ENCODE measurements at regions of chr1 and their contacts with region 1.

Region 1: GRCh38 chr1:247681288-247681897 is 1.9 kb upstream of the OR13G1 start:
- DNase-seq: peak; percentile 52 to 79 (median 54)
- ATAC-seq: peak; percentile 91
- H3K4me3 ChIP-seq: no peak overlapping the region
- H3K27ac ChIP-seq: no peak overlapping the region
- H3K4me1 ChIP-seq: no peaks in the 10 kb centered on the region
- H3K27me3 ChIP-seq: no peaks in the 10 kb centered on the region
- CTCF ChIP-seq: peak; percentile 67 to 87 (median 71)
- EP300 ChIP-seq: no peak
- POLR2A ChIP-seq: no peak
- RAD21 ChIP-seq: peak; percentile 76 to 80

Region 2: DNA sequence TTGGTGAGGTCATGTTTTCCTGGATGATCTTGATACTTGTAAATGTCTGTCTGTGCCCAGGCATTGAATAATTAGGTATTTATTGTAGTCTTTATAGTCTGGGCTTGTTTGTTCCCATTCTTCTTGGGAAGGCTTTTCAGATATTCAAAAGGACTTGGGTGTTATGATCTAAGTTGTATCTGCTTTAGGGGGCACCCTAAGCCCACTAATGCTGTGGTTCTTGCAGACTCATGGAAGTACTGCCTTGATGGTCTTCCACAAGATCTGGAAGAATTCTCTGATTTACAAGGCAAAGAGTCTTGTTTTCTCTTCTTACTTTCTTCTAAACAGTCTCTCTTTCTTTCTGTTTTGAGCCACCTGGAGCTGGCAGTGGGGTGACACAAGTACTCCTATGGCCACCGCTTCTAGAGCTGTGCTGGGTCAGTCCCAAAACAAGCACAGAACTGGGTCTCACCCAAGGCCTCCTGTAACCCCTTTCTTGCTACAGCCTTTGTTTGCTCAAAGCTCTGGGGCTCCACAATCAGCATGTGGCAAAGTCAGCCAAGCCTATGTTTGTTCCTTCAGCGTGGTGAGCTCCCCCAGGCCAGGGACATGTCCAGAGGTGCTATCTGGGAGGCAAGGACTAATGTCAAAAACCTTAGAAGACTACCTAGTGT is 412.9 kb before region 1 on chr1:
- CTCF ChIA-PET with region 1: no interaction called
- POLR2A ChIA-PET with region 1: no interaction called
- in situ Hi-C with region 1: no loop called
- intact Hi-C with region 1: no loop called
- DNase-seq: no peak
- ATAC-seq: no peak
- H3K4me3 ChIP-seq: no peak overlapping the region
- H3K27ac ChIP-seq: no peak overlapping the region
- H3K4me1 ChIP-seq: no peaks in the 10 kb centered on the region
- H3K27me3 ChIP-seq: no peaks in the 10 kb centered on the region
- CTCF ChIP-seq: no peak
- EP300 ChIP-seq: no peak
- POLR2A ChIP-seq: no peak
- RAD21 ChIP-seq: peak in 1 of 2 experiments; percentile 29; a peak in 2 of 4 replicates

Region 3: DNA sequence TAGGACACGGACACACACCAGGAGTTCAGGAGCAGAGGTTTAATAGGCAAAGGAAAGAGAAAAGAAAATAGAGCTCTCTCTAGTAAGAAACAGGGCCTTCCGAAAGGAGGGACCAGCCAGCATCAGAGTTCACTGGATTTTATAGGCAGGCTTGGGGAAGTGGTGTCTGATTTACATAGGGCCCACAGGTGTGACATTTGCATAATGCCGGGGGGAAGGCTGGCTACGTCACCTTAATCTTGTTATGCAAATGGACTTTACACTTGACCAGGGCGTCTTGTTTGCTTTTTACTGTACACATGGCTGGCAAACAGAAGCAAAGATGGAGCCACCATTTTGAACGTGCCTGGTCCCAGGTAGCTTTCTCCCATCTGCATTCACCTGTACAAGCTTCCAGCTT is 142.6 kb after region 1 on chr1 and contains the start of gene OR14A16:
- CTCF ChIA-PET with region 1: no interaction called
- POLR2A ChIA-PET with region 1: no interaction called
- in situ Hi-C with region 1: no loop called
- intact Hi-C with region 1: no loop called
- DNase-seq: no peak
- ATAC-seq: no peak
- H3K4me3 ChIP-seq: no peak within 1 kb of the TSS
- H3K27ac ChIP-seq: no peak within 1 kb of the TSS
- H3K4me1 ChIP-seq: no peaks in the 10 kb centered on the region
- H3K27me3 ChIP-seq: no peaks in the 10 kb centered on the region
- CTCF ChIP-seq: no peak
- EP300 ChIP-seq: no peak
- POLR2A ChIP-seq: no peak
- RAD21 ChIP-seq: no peak
- polyA plus RNA-seq, gene OR14A16: not detected

Region 4: GRCh38 chr1:247936415-247936814 is 255.0 kb after region 1 on chr1:
- CTCF ChIA-PET with region 1: interaction called, 3 read pairs
- POLR2A ChIA-PET with region 1: no interaction called
- in situ Hi-C with region 1: no loop called
- intact Hi-C with region 1: loop called (anchors 5 kb)
- DNase-seq: no peak
- ATAC-seq: no peak
- H3K4me3 ChIP-seq: no peak overlapping the region
- H3K27ac ChIP-seq: no peak overlapping the region
- H3K4me1 ChIP-seq: peaks cover 0 to 11% of the 10 kb centered on the region in 2 experiments; a peak in 2 of 5 replicates
- H3K27me3 ChIP-seq: no peaks in the 10 kb centered on the region
- CTCF ChIP-seq: no peak
- EP300 ChIP-seq: no peak
- POLR2A ChIP-seq: no peak
- RAD21 ChIP-seq: no peak